ENCODE measurements at regions of chr3 and their contacts with region 1.

Region 1: DNA sequence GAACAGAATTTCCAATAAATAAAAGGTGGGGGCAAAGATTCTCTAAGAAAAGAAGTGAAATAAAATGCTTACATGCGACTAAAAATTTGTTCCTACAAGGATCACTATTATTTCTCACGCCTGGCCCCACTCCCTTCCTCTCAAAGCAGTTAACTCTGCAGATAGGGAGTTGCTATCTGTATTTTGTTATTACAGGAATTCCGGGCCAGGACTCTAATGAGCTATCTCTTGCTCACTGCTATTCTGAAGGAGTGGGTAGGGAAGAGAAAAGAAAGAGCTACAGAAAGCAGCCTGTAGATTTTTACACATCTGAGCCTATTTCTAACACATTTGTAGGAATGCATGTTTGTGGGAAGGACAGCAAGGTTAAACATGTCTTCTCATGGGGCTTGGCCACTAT is 140.4 kb downstream of the PCCB start:
- DNase-seq: no peak
- H3K4me3 ChIP-seq: no peak overlapping the region
- H3K27ac ChIP-seq: no peak overlapping the region
- H3K4me1 ChIP-seq: no peaks in the 10 kb centered on the region
- H3K27me3 ChIP-seq: no peaks in the 10 kb centered on the region
- CTCF ChIP-seq: no peak
- EP300 ChIP-seq: no peak
- RAD21 ChIP-seq: no peak

Region 2: GRCh38 chr3:136075218-136075808 is 315.3 kb before region 1 on chr3:
- CTCF ChIA-PET with region 1: interaction called, 11 read pairs
- POLR2A ChIA-PET with region 1: no interaction called
- DNase-seq: peak; percentile 53
- H3K4me3 ChIP-seq: no peak overlapping the region
- H3K27ac ChIP-seq: peak overlapping the region in 1 of 2 experiments; percentile 66; a peak in 2 of 4 replicates
- H3K4me1 ChIP-seq: peaks cover 7 to 10% of the 10 kb centered on the region in 2 experiments
- H3K27me3 ChIP-seq: no peaks in the 10 kb centered on the region
- CTCF ChIP-seq: peak; percentile 93
- EP300 ChIP-seq: no peak
- RAD21 ChIP-seq: peak; percentile 99

Region 3: GRCh38 chr3:136404056-136404455 is 13.5 kb after region 1 on chr3:
- CTCF ChIA-PET with region 1: interaction called, 33 read pairs
- POLR2A ChIA-PET with region 1: no interaction called
- DNase-seq: no peak
- H3K4me3 ChIP-seq: no peak overlapping the region
- H3K27ac ChIP-seq: no peak overlapping the region; a peak in 1 of 4 replicates
- H3K4me1 ChIP-seq: no peaks in the 10 kb centered on the region
- H3K27me3 ChIP-seq: no peaks in the 10 kb centered on the region
- CTCF ChIP-seq: no peak
- EP300 ChIP-seq: no peak
- RAD21 ChIP-seq: no peak

Region 4: GRCh38 chr3:136414476-136414875 is 23.9 kb after region 1 on chr3:
- CTCF ChIA-PET with region 1: interaction called, 12 read pairs
- POLR2A ChIA-PET with region 1: no interaction called
- DNase-seq: no peak
- H3K4me3 ChIP-seq: no peak overlapping the region
- H3K27ac ChIP-seq: no peak overlapping the region
- H3K4me1 ChIP-seq: no peaks in the 10 kb centered on the region
- H3K27me3 ChIP-seq: no peaks in the 10 kb centered on the region
- CTCF ChIP-seq: no peak
- EP300 ChIP-seq: no peak
- RAD21 ChIP-seq: no peak

Measured in SK-N-SH (cell line).